ENCODE measurements at regions of chr6 and their contacts with region 1.

Region 1: GRCh38 chr6:75893058-75893775 is 144.2 kb downstream of the MYO6 start:
- DNase-seq: no peak
- ATAC-seq: no peak
- H3K4me3 Mint-ChIP-seq: no peak overlapping the region
- H3K27ac Mint-ChIP-seq: no peak overlapping the region
- H3K4me1 Mint-ChIP-seq: peaks cover 2% of the 10 kb centered on the region
- H3K27me3 Mint-ChIP-seq: peaks cover 1% of the 10 kb centered on the region

Region 2: GRCh38 chr6:75876152-75876551 is 17.1 kb before region 1 on chr6:
- CTCF ChIA-PET with region 1: interaction called, 37 read pairs
- POLR2A ChIA-PET with region 1: no interaction called
- intact Hi-C with region 1: no loop called
- DNase-seq: no peak
- ATAC-seq: no peak
- H3K4me3 Mint-ChIP-seq: no peak overlapping the region
- H3K27ac Mint-ChIP-seq: no peak overlapping the region
- H3K4me1 Mint-ChIP-seq: no peaks in the 10 kb centered on the region
- H3K27me3 Mint-ChIP-seq: no peaks in the 10 kb centered on the region

Region 3: DNA sequence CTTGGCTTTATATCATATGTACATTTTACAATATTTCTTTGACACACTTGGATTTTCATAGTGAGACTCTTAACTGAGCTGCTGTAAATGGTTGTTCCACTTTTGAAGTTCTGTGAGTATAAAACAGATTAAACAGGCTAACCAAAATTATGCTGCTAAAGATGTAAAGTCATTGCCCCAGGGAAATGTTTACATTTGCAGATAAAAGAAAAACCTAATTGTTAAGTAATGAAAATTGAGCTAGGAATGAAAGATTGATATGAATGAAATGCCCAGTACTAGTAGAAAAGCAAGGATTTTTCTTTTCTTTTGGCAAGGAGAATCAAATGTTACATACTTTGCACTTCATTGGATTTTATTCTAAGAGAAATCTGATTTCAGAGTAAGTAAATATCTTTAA is 19.8 kb after region 1 on chr6:
- CTCF ChIA-PET with region 1: interaction called, 29 read pairs
- POLR2A ChIA-PET with region 1: no interaction called
- intact Hi-C with region 1: no loop called
- DNase-seq: no peak
- ATAC-seq: no peak
- H3K4me3 Mint-ChIP-seq: no peak overlapping the region
- H3K27ac Mint-ChIP-seq: no peak overlapping the region
- H3K4me1 Mint-ChIP-seq: no peaks in the 10 kb centered on the region
- H3K27me3 Mint-ChIP-seq: peaks cover 5% of the 10 kb centered on the region

Region 4: DNA sequence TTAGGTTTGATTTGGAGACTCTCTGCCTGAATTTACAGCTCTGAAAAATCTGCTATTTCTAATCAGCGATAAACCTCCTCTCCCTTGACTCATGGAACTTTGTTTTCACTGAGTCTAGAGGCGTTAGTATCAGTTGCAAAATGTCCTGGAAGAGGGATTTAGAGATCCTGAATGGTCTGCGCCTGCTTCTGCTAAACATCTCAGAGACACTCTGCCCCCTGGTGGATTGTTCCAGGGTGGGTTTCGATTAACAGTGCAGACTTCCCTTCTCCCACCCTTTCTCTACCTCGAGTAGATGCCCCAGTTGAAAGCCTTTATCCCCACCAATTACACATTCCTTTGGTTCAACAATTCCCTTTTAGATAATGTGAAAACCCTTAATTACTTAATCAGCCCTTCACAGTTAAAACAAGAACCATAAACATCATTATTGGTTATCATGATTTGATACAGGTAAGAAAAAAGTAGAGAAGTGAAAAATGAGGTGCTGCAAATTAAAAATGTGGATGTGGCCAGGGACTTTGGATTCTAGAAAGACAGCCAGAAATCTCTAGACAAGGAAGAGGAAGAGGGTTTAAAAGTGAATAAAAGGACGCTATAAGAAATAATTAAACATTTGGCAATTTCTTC is 1564.6 kb after region 1 on chr6:
- CTCF ChIA-PET with region 1: interaction called, 9 read pairs
- POLR2A ChIA-PET with region 1: no interaction called
- intact Hi-C with region 1: loop called (anchors 2 to 5 kb)
- DNase-seq: peak; percentile 63
- ATAC-seq: no peak
- H3K4me3 Mint-ChIP-seq: no peak overlapping the region
- H3K27ac Mint-ChIP-seq: no peak overlapping the region
- H3K4me1 Mint-ChIP-seq: peaks cover 3% of the 10 kb centered on the region
- H3K27me3 Mint-ChIP-seq: peaks cover 18% of the 10 kb centered on the region

Measured in activated CD4-positive, alpha-beta T cell treated with anti-CD3 and anti-CD28 coated beads for 36 hours (primary cell).